Breast epithelium (tissue), 4 donors: ENCODE measurements at regions of chr3 and their contacts with region 1.

Region 1: DNA sequence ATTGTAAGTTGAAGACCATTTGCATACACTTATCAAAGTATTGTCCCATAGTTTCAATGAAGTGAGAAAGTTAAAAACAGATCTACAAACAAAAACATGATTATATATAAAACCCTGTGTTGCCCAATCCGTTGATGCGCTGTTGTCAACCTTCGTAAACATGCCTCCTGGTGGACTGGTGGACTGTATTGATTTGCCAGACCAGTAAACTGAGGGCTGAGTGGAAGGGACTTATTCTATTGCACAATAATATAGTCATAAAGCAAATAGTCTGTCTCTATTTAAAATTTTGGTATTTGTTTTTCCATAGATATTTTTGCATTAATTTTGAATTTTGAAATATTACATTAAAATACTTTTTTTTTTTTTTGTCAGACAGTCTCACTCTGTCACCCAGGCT is 102.5 kb downstream of the GAP43 start:
- DNase-seq: no peak
- H3K4me3 ChIP-seq: no peak overlapping the region
- H3K27ac ChIP-seq: no peak overlapping the region
- H3K4me1 ChIP-seq: no peaks in the 10 kb centered on the region
- H3K27me3 ChIP-seq: no peaks in the 10 kb centered on the region
- CTCF ChIP-seq: no peak
- POLR2A ChIP-seq: no peak

Region 2: GRCh38 chr3:115710799-115711198 is 15.0 kb before region 1 on chr3:
- intact Hi-C with region 1: loop called (anchors 1 kb)
- DNase-seq: no peak
- H3K4me3 ChIP-seq: no peak overlapping the region
- H3K27ac ChIP-seq: no peak overlapping the region
- H3K4me1 ChIP-seq: no peaks in the 10 kb centered on the region
- H3K27me3 ChIP-seq: no peaks in the 10 kb centered on the region
- CTCF ChIP-seq: no peak
- POLR2A ChIP-seq: no peak

Region 3: DNA sequence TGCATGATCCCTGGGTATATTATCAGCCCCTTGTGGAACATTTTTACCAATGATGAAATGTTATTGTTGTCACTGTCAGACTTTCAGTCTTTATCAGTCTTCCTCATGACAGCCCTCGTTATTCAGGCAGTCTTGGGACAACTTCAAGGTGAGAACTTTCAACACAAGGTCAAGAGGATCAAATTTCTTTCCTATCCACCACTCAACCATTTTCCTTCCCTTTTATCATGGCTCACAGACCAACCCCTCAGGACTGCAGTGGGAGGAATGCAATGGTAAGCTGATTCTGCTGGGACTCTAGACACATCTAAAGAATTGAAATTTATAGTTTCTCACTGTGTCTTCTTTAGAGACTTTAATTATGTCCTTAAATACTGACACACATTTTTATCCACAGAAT is 826.4 kb after region 1 on chr3:
- intact Hi-C with region 1: no loop called
- DNase-seq: no peak
- H3K4me3 ChIP-seq: no peak overlapping the region
- H3K27ac ChIP-seq: no peak overlapping the region
- H3K4me1 ChIP-seq: no peaks in the 10 kb centered on the region
- H3K27me3 ChIP-seq: no peaks in the 10 kb centered on the region
- CTCF ChIP-seq: no peak
- POLR2A ChIP-seq: no peak